Activated CD8-positive, alpha-beta T cell treated with anti-CD3 and anti-CD28 coated beads, Interleukin-2, amount 10 ng/mL, durations not matched to agents 7 days and 5 days (primary cell): ENCODE measurements at regions of chr17 and their contacts with region 1.

Region 1: GRCh38 chr17:82668631-82669099 is 20.4 kb upstream of the WDR45B start:
- DNase-seq: peak; percentile 54
- ATAC-seq: peak; percentile 91
- H3K4me3 Mint-ChIP-seq: no peak overlapping the region
- H3K27ac Mint-ChIP-seq: no peak overlapping the region
- H3K4me1 Mint-ChIP-seq: peaks cover 6% of the 10 kb centered on the region
- H3K27me3 Mint-ChIP-seq: no peaks in the 10 kb centered on the region

Region 2: GRCh38 chr17:82623707-82624106 is 45.0 kb before region 1 on chr17:
- CTCF ChIA-PET with region 1: no interaction called
- POLR2A ChIA-PET with region 1: no interaction called
- DNase-seq: no peak
- ATAC-seq: no peak
- H3K4me3 Mint-ChIP-seq: no peak overlapping the region
- H3K27ac Mint-ChIP-seq: no peak overlapping the region
- H3K4me1 Mint-ChIP-seq: no peaks in the 10 kb centered on the region
- H3K27me3 Mint-ChIP-seq: no peaks in the 10 kb centered on the region

Region 3: GRCh38 chr17:82679586-82680465 is 11.2 kb after region 1 on chr17:
- CTCF ChIA-PET with region 1: interaction called, 18 read pairs
- POLR2A ChIA-PET with region 1: no interaction called
- DNase-seq: no peak
- ATAC-seq: no peak
- H3K4me3 Mint-ChIP-seq: no peak overlapping the region
- H3K27ac Mint-ChIP-seq: no peak overlapping the region
- H3K4me1 Mint-ChIP-seq: no peaks in the 10 kb centered on the region
- H3K27me3 Mint-ChIP-seq: no peaks in the 10 kb centered on the region

Region 4: DNA sequence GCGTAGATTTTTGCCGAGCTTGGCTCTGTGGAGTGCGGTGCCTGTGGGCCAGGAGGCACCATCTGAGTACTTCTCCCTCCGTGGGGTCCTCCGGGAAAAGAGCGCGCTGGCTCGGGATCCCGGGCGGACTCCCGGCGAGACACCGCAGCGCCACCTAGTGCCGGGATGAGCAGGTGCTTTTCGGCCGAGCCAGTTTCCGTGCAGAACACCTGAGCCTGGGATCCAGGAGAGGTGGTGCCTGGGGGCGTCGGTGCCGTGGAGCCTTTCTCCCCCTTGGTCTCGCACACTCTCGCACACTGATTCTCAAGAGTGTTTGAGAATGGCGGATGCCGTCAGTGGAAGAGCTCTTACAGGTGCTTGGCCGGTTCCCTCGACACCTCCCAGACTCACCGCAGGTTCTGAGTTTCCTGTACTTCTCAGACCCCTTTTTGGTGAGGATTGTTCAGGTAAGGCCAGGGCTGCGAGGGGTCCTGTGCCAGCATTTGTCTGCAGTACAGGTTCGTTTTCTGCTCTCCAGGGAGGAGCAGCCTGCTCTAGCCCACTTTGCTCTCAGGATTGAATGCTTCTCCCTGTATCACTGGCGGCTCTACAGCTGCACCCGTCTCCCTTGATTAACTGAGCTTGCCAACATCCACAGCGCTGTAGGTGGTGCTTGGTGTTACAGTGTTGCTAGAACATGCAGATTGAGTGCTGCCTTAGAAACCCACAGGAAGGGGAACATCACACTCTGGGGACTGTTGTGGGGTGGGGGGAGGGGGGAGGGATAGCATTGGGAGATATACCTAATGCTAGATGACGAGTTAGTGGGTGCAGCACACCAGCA is 106.5 kb after region 1 on chr17:
- CTCF ChIA-PET with region 1: interaction called, 18 read pairs
- POLR2A ChIA-PET with region 1: no interaction called
- DNase-seq: peak; percentile 56
- ATAC-seq: peak; percentile 74
- H3K4me3 Mint-ChIP-seq: peak overlapping the region; percentile 51
- H3K27ac Mint-ChIP-seq: peak overlapping the region; percentile 84
- H3K4me1 Mint-ChIP-seq: peaks cover 32% of the 10 kb centered on the region
- H3K27me3 Mint-ChIP-seq: no peaks in the 10 kb centered on the region